Heart right ventricle (tissue), 16 donors: ENCODE measurements at regions of chr19 and their contacts with region 1.

Region 1: DNA sequence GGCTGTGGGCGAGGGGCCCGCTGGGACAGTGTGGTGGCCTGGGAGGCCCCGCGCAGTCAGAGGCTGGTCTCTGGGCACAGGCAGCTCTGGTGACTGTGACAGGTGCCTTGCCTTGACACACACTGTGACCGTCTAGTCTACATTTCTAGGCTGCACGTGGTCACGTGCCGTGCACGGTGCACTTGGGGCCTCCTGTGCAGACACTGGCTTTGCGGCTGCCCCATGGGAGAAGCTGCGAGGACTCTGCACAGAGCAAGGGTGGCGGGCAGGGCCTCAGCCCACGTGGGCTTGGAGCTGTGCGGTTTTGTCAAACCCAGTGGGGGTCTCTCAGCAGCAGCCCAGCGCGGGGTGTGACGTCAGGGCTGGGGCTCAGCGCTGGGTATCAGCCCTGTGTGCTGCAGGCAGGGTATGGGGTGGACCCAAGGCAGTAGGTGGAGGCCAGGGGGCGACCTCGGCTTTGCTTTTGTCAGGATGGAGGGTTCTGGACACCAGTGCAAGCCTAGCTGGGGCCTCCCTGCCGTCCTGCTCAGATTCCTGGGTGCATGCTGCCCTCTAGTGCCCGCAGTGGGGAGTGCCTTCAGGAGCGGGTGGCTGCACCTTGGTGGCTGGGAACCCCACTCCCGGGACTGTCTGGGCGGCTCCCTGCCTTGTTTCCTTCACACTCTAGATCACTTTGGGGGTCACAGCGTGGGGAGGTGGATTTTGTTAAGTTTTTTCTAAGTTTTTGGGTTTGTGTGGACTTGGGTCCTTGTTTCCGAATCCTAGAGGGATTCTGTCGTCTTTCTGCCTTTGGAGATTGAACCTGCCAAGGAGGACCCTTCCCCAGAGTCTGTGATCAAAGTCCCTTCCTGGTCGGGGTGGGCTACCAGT is 62.6 kb downstream of the KDM4B start:
- DNase-seq: peak; percentile 80 to 87
- ATAC-seq: peak; percentile 72 to 91 (median 84)
- H3K4me3 ChIP-seq: no peak overlapping the region
- H3K27ac ChIP-seq: peak overlapping the region in 1 of 10 donors; percentile 62
- H3K4me1 ChIP-seq: peaks cover 3 to 74% (median 51%) of the 10 kb centered on the region in 9 donors
- H3K27me3 ChIP-seq: no peaks in the 10 kb centered on the region
- CTCF ChIP-seq: peak; percentile 88 to 97 (median 94)

Region 2: GRCh38 chr19:4815426-4816201 is 215.9 kb before region 1 on chr19:
- intact Hi-C with region 1: loop called in 8 of 10 experiments (anchors 2 to 5 kb)
- DNase-seq: peak; percentile 78 to 94
- ATAC-seq: peak; percentile 81 to 96 (median 94)
- H3K4me3 ChIP-seq: peak overlapping the region in 7 of 10 donors; percentile 9 to 42 (median 30)
- H3K27ac ChIP-seq: peak overlapping the region in 6 of 10 donors; percentile 36 to 82 (median 56)
- H3K4me1 ChIP-seq: peaks cover 6 to 43% (median 19%) of the 10 kb centered on the region in 9 donors
- H3K27me3 ChIP-seq: no peaks in the 10 kb centered on the region
- CTCF ChIP-seq: no peak

Region 3: DNA sequence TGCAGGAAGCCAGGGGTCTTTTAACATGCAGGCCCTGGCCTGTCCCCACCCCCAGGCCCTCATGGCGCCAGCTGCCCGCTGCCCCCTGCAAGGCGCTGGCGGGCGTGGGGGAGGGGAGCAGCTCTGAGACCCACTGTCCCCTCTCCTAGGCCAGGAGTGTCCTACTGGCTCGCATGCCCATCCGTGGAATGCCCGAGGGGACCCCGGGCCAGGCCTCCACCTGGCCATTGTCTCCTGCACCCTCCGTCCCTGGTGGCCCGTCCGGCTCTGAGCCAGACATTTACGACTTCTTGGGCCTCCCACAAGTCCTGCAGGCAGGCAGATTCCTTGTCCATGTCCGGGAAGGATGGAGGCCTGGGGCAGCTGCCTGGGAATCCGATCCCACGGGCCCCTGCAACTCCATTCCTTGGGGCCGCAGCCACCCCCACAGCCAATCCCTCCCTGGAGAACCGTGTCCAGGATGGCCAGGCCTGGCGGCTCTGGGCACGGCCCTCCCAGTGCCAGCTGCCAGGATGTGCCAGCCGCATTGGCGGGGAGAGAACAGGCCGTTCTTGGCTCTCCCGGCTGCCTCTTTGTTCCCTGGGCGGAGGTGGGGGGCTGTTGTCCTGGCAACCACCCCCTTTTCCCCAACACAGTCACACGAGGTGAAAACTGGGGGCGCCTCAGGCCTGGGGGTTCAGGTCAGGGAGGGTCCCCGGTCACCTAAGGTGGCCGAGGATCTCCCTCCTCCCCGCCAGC is 153.5 kb before region 1 on chr19:
- intact Hi-C with region 1: loop called in 7 of 10 experiments (anchors 2 to 5 kb)
- DNase-seq: peak in 1 of 2 donors; percentile 57
- ATAC-seq: peak; percentile 48 to 99 (median 91)
- H3K4me3 ChIP-seq: no peak overlapping the region
- H3K27ac ChIP-seq: peak overlapping the region; percentile 53 to 76 (median 70)
- H3K4me1 ChIP-seq: peaks cover 0 to 13% (median 6%) of the 10 kb centered on the region in 9 donors
- H3K27me3 ChIP-seq: peaks cover 0 to 12% (median 8%) of the 10 kb centered on the region in 7 donors
- CTCF ChIP-seq: no peak

Region 4: DNA sequence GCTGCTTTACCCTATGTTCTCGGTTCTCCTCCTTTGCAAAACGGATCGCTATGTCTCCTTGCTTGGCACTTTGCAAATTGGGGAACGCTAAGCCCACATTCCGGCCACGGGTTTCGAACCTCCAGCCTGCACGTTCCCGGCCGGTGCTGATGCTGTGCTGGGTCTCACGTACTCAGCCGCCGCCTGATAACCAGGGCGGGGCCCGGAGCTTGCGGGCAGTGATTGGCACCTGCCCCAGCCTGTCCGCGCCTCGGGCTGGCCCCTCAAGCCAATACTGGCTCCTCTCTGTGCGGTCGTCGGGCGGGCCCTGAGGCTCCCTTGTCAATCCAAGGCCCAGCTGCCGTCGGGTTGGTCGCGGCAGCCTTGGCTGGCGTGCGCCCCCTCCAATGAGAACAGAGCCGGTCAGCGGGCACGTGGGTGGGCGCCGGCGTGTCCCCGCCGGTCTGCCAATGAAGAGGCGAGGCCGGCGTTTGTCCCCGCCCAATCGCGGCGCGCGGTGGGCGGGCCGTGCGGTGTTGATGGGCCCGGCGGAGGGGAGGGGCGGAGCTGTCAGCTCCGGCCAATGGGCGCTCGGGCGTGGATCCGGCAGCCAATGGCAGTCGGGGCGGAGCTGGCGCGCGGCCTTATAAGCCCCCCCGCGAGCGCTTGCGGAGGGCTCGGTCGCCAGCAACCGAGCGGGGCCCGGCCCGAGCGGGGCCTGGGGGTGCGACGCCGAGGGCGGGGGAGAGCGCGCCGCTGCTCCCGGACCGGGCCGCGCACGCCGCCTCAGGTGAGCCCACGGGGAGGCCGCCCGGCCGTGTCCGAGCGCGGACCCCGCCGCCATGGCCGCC is 62.8 kb before region 1 on chr19 and contains the start of gene KDM4B:
- intact Hi-C with region 1: loop called in 4 of 10 experiments (anchors 5 to 10 kb)
- DNase-seq: peak; percentile 99
- ATAC-seq: peak; percentile 96 to 98 (median 98)
- H3K4me3 ChIP-seq: peak within 1 kb of the TSS; percentile 24 to 76 (median 70)
- H3K27ac ChIP-seq: peak within 1 kb of the TSS; percentile 44 to 87 (median 72)
- H3K4me1 ChIP-seq: peaks cover 3 to 47% (median 35%) of the 10 kb centered on the region in 9 donors
- H3K27me3 ChIP-seq: no peaks in the 10 kb centered on the region
- CTCF ChIP-seq: no peak
- total RNA-seq, gene KDM4B: 21.4 to 35.8 (median 30.3) TPM

Region 5: DNA sequence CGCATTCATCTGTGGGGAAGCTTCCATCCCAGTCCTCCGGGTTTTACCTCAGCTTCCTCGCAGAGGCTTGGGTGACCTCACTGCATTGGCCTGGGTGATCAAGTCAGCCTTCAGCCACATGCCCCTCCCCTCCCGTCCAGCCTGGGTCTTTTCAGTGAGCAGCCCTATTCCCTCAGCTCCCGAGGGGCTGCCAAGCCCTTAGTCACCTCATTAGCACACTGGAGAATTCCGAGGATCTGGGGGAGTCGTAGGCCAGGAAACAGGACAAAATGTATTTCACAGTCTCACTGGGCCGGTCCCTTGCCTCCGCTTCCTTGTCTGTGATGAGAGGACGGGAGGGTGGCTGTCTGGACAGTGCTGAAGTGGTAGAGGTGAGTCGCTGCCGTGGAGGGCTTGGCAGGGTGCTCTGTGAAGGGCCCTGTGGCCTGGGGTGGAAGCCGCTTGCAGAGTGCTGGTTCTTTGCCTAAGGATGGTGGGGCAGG is 42.7 kb before region 1 on chr19:
- intact Hi-C with region 1: no loop called
- DNase-seq: peak in 1 of 2 donors; percentile 59
- ATAC-seq: peak; percentile 62 to 87 (median 71)
- H3K4me3 ChIP-seq: peak overlapping the region in 2 of 10 donors; percentile 1 to 23
- H3K27ac ChIP-seq: peak overlapping the region in 7 of 10 donors; percentile 15 to 67 (median 48)
- H3K4me1 ChIP-seq: peaks cover 34 to 71% (median 53%) of the 10 kb centered on the region in 9 donors
- H3K27me3 ChIP-seq: no peaks in the 10 kb centered on the region
- CTCF ChIP-seq: no peak

Region 6: GRCh38 chr19:5001615-5002014 is 29.9 kb before region 1 on chr19:
- intact Hi-C with region 1: loop called in 2 of 10 experiments (anchors 1 to 5 kb)
- DNase-seq: no peak
- ATAC-seq: peak in 1 of 8 donors; percentile 23
- H3K4me3 ChIP-seq: no peak overlapping the region
- H3K27ac ChIP-seq: no peak overlapping the region
- H3K4me1 ChIP-seq: peaks cover 0 to 14% (median 2%) of the 10 kb centered on the region in 9 donors
- H3K27me3 ChIP-seq: no peaks in the 10 kb centered on the region
- CTCF ChIP-seq: peak; percentile 29 to 69 (median 54)

Region 7: GRCh38 chr19:5115771-5116202 is 84.3 kb after region 1 on chr19:
- intact Hi-C with region 1: no loop called
- DNase-seq: no peak
- ATAC-seq: peak in 3 of 8 donors; percentile 26 to 39 (median 30)
- H3K4me3 ChIP-seq: no peak overlapping the region
- H3K27ac ChIP-seq: peak overlapping the region in 2 of 10 donors; percentile 62 to 88
- H3K4me1 ChIP-seq: peaks cover 0 to 24% (median 9%) of the 10 kb centered on the region in 9 donors
- H3K27me3 ChIP-seq: no peaks in the 10 kb centered on the region
- CTCF ChIP-seq: no peak

Region 8: GRCh38 chr19:5125797-5126497 is 94.5 kb after region 1 on chr19:
- intact Hi-C with region 1: no loop called
- DNase-seq: no peak
- ATAC-seq: no peak
- H3K4me3 ChIP-seq: no peak overlapping the region
- H3K27ac ChIP-seq: peak overlapping the region in 3 of 10 donors; percentile 36 to 59 (median 41)
- H3K4me1 ChIP-seq: peaks cover 28 to 47% (median 41%) of the 10 kb centered on the region in 9 donors
- H3K27me3 ChIP-seq: no peaks in the 10 kb centered on the region
- CTCF ChIP-seq: no peak